ENCODE measurements at regions of chr1 and their contacts with region 1.

Region 1: GRCh38 chr1:231106347-231106746 is 55.5 kb upstream of the TRIM67 start:
- DNase-seq: peak; percentile 74
- H3K4me3 ChIP-seq: no peak overlapping the region
- H3K27ac ChIP-seq: no peak overlapping the region
- H3K4me1 ChIP-seq: peaks cover 12% of the 10 kb centered on the region
- H3K27me3 ChIP-seq: peaks cover 5 to 6% of the 10 kb centered on the region in 2 experiments
- CTCF ChIP-seq: no peak
- POLR2A ChIP-seq: no peak

Region 2: GRCh38 chr1:230849451-230850224 is 256.7 kb before region 1 on chr1:
- CTCF ChIA-PET with region 1: no interaction called
- POLR2A ChIA-PET with region 1: no interaction called
- dilution Hi-C with region 1: no loop called
- intact Hi-C with region 1: loop called (anchors 1 kb)
- DNase-seq: peak; percentile 93
- H3K4me3 ChIP-seq: no peak overlapping the region
- H3K27ac ChIP-seq: peak overlapping the region; percentile 78
- H3K4me1 ChIP-seq: peaks cover 22% of the 10 kb centered on the region
- H3K27me3 ChIP-seq: no peaks in the 10 kb centered on the region
- CTCF ChIP-seq: no peak
- POLR2A ChIP-seq: no peak

Region 3: DNA sequence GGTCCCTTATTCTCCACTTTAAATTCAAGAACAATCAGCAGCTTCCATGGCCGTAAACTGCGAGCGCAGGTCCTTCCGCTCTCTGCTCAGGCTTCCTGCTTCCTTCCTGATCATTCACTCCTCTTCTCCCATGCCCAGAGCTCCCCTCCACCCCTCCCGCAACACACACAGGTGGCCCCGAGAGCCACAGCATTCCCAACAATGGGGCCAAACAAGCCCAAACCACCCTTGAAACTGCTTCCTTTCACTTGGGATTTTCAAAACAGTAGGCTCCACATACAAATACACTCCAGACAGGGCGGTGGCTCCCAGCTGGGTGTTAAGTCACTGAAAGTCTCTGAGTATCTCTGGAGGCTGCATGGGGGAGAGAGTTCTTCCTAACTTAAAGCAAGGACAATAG is 77.7 kb before region 1 on chr1:
- CTCF ChIA-PET with region 1: no interaction called
- POLR2A ChIA-PET with region 1: no interaction called
- dilution Hi-C with region 1: no loop called
- intact Hi-C with region 1: loop called (anchors 5 kb)
- DNase-seq: peak; percentile 89
- H3K4me3 ChIP-seq: no peak overlapping the region
- H3K27ac ChIP-seq: peak overlapping the region; percentile 45
- H3K4me1 ChIP-seq: peaks cover 16% of the 10 kb centered on the region
- H3K27me3 ChIP-seq: no peaks in the 10 kb centered on the region
- CTCF ChIP-seq: no peak
- POLR2A ChIP-seq: no peak

Region 4: DNA sequence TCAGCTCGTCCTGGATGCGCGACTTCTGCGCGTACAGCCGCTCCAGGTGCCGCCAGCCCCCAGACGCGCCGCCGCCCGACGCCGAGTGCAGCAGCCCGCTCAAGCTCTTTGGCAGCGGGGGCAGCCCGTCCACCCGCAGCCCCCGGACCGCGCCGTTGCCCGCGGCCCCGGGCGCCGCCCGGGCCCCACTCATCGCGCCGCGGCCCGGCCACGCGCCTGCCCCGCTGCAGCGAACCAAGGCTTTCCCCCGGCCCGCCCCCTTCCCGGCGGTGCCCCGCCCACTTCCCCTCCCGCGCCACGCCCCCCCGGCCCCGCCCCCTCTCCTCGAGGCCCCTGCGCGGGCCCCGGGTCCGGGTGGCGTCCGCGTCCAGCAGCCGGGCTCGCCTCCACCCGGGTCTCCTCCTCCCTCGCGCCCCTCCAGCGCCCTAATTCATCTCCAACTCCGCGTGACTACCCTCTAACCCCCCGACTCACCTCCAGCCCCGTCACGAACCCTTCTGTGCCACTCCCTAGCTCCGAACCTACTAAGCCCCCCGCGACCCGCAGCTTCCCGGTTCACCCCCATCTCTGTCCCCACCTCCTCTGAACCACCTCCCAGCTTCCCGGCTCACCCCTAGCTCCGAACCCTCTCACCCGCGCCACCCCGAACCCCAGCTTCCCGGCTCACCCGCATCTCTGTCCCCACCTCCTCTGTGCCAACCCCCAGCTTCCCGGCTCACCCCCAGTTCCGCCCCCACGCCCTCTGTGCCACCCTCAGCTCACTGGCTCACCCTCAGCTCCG is 66.1 kb before region 1 on chr1 and contains the start of gene FAM89A:
- CTCF ChIA-PET with region 1: no interaction called
- POLR2A ChIA-PET with region 1: no interaction called
- dilution Hi-C with region 1: no loop called
- intact Hi-C with region 1: loop called (anchors 2 kb)
- DNase-seq: no peak
- H3K4me3 ChIP-seq: peak within 1 kb of the TSS; percentile 64 to 84 (median 65)
- H3K27ac ChIP-seq: no peak within 1 kb of the TSS
- H3K4me1 ChIP-seq: peaks cover 16% of the 10 kb centered on the region
- H3K27me3 ChIP-seq: peaks cover 11 to 28% of the 10 kb centered on the region in 2 experiments
- CTCF ChIP-seq: no peak
- POLR2A ChIP-seq: no peak
- total RNA-seq, gene FAM89A: 13.6 and 24.0 TPM in 2 replicates

Region 5: DNA sequence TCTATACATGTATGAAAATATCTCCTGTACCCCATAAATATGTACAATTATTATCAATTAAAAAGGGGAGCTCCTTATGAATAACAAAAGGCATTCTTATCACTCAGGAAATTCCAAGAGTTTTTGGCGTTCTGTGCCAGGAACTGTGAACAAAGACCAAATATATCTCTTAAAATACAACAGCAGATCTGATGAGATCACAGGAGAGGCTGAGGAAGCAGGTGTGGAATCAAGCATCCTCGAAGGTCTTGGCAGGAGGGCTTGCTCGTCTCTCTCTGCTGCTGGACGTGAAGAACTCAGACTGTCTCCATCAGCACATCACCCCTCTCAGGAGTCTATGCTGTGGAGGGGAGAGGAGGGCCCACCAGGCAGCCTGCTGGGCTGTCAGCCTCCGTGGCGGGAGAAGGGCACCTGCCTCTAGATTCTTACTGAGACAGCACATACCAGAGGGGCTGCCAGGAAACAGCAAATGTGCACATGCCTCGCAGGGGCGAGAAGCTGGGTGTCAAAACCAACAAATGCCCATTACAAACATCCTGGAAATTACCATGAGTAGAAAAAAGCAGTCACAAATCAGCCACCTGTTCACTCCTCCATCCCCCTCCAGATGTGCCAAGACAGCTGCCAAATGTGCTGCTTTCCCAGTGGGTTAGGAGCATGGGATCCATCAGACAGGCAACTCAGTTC is 35.4 kb before region 1 on chr1:
- CTCF ChIA-PET with region 1: interaction called, 3 read pairs
- POLR2A ChIA-PET with region 1: no interaction called
- dilution Hi-C with region 1: no loop called
- intact Hi-C with region 1: loop called (anchors 1 kb)
- DNase-seq: peak; percentile 71
- H3K4me3 ChIP-seq: no peak overlapping the region
- H3K27ac ChIP-seq: peak overlapping the region; percentile 22
- H3K4me1 ChIP-seq: peaks cover 13% of the 10 kb centered on the region
- H3K27me3 ChIP-seq: peaks cover 0 to 4% of the 10 kb centered on the region in 2 experiments
- CTCF ChIP-seq: no peak
- POLR2A ChIP-seq: no peak

Region 6: GRCh38 chr1:231139659-231140654 is 33.6 kb after region 1 on chr1:
- CTCF ChIA-PET with region 1: no interaction called
- POLR2A ChIA-PET with region 1: no interaction called
- dilution Hi-C with region 1: no loop called
- intact Hi-C with region 1: loop called (anchors 1 kb)
- DNase-seq: no peak
- H3K4me3 ChIP-seq: no peak overlapping the region
- H3K27ac ChIP-seq: peak overlapping the region; percentile 38
- H3K4me1 ChIP-seq: peaks cover 19% of the 10 kb centered on the region
- H3K27me3 ChIP-seq: peaks cover 0 to 5% of the 10 kb centered on the region in 2 experiments
- CTCF ChIP-seq: no peak
- POLR2A ChIP-seq: no peak

Region 7: GRCh38 chr1:231162297-231162969 is 56.1 kb after region 1 on chr1:
- CTCF ChIA-PET with region 1: interaction called, 5 read pairs
- POLR2A ChIA-PET with region 1: no interaction called
- dilution Hi-C with region 1: no loop called
- intact Hi-C with region 1: loop called (anchors 2 kb)
- DNase-seq: peak; percentile 34
- H3K4me3 ChIP-seq: peak overlapping the region in 1 of 3 experiments; percentile 19
- H3K27ac ChIP-seq: no peak overlapping the region
- H3K4me1 ChIP-seq: no peaks in the 10 kb centered on the region
- H3K27me3 ChIP-seq: peaks cover 57 to 72% of the 10 kb centered on the region in 2 experiments
- CTCF ChIP-seq: no peak
- POLR2A ChIP-seq: no peak